ENCODE measurements at regions of chr19 and their contacts with region 1.

Region 1: DNA sequence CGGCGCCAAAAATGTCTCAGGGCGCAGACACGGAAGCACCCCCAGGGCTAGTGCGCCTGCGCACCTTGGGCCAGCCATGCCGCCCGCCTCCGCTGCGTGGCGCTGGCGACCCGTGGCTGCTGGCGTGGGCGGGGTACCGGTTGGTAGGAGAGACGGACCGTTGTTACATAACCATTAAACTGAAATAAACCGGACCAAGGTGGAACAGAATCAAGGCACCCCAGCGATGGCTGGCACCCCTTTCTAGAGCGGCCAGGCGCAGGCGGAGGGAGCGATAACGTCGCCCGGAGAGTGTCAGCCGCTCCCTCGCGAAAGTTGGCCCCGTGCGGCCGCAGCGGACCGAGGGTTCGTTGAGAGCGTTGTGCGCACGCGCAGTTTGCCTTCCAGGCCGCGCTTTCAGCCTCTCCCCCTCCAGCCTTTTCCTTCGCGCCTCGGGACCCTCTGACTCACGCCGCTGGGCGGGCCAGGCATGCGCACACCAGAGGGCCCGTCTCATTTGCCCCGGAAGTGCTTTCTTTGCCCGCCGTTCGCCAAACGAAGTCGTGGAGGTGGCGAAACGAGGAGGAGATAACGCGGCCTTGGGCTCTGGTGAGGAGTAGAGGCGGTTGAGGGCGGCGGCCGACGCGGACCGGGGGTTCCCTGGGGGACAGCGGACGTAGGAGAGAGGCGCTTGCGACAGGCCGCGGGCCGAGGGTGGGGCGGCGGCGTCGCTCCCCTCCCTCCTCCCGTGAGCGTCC is at the starts of genes PLEKHJ1 and SF3A2:
- DNase-seq: peak; percentile 84 to 95
- H3K4me3 ChIP-seq: peak within 1 kb of the TSS; percentile 82
- H3K27ac ChIP-seq: peak within 1 kb of the TSS; percentile 83
- H3K4me1 ChIP-seq: peaks cover 15% of the 10 kb centered on the region
- H3K27me3 ChIP-seq: no peaks in the 10 kb centered on the region
- CTCF ChIP-seq: peak; percentile 90
- total RNA-seq, gene PLEKHJ1: 38.6 and 45.9 TPM in 2 replicates
- total RNA-seq, gene SF3A2: 73.5 and 83.0 TPM in 2 replicates

Region 2: DNA sequence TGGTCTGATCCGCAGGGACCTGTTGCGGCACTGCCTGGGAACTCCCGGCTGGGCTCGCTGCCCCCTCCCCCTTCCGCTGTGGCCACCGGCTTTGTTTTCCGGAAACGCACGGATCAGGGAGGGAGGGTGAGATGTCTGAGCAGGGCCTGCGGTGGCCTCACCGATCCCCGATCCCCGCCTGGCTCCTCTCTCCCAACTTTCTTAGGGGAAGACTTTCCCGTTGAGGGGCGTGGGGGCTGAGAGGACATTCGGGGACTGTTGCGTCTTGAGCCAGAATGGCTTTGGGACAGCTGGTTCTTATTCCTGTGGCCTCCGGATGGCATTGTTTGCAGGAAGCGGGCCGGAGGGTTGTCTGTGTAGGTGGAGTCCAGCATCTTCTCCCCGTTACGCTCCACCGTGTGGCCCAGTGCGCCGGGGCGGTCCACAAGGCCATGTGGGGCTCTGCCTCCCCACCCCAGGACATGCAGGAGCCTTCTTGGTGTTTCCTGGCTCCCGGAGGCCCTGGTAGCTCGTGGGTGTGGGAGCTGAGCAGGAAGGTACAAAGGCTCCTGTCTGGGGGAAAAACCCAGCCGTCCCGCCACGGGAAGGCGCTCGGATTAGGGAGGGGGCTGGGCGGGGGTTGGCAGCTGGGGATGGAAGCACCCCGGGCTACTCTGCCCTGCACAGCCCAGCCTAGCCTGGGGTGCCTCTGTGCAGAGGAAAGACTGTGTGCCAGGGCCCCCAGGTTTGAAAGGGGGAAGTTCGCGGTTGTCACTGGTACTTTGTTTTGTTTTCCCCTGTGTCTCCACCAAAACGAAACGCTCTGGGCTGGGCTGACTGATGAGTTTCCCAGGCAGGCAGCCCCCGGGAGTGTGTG is 294.2 kb before region 1 on chr19:
- CTCF ChIA-PET with region 1: no interaction called
- POLR2A ChIA-PET with region 1: no interaction called
- intact Hi-C with region 1: no loop called
- DNase-seq: peak in 1 of 2 experiments; percentile 61
- H3K4me3 ChIP-seq: peak overlapping the region; percentile 81
- H3K27ac ChIP-seq: 0 out of 2 replicates have a peak overlapping the region, but pooled peaks have one; percentile 47
- H3K4me1 ChIP-seq: peaks cover 6% of the 10 kb centered on the region; the same call in 1 of the 2 replicates
- H3K27me3 ChIP-seq: no peaks in the 10 kb centered on the region
- CTCF ChIP-seq: no peak

Region 3: DNA sequence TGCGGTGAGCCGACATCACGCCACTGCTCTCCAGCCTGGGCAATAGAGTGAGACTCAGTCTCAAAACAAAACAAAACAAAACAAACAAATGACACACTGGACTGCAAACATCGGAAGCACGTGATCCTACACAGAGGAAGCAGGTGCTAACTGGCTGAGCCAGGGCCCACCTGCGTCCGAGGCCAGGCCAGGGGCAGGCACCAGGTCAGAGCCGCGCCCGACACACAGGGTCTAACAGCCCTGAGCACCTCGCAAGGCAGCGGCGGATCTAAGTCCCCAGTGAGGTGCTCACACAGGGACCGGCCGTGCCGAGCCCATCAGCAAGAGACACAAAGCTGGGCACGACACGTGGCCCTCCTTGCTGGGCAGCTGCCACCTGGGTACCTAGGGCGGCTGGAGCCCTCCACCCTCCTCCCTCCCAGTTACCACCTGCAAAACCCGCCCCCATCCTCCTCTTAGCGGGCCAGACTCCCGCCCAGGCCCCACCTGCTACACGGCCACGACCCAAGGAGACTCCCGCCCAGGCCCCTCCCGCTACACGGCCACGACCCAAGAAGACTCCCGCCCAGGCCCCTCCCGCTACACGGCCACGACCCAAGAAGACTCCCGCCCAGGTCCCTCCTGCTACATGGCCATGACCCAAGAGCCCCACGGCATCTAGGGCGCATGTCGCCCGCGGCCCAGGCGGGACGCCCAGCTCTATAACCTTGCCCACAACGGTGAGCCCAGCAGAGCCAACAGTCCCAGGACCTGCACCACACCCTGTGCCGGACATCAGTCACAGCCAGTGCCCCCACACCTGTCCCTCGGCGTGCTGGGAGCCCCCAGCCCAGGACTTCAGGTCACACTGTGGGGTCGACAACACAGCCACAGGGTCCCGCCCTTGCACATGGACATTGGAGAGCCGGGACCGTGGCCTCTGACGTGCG is 100.7 kb before region 1 on chr19:
- CTCF ChIA-PET with region 1: no interaction called
- POLR2A ChIA-PET with region 1: no interaction called
- intact Hi-C with region 1: no loop called
- DNase-seq: no peak
- H3K4me3 ChIP-seq: no peak overlapping the region
- H3K27ac ChIP-seq: no peak overlapping the region
- H3K4me1 ChIP-seq: no peaks in the 10 kb centered on the region
- H3K27me3 ChIP-seq: no peaks in the 10 kb centered on the region
- CTCF ChIP-seq: no peak

Region 4: DNA sequence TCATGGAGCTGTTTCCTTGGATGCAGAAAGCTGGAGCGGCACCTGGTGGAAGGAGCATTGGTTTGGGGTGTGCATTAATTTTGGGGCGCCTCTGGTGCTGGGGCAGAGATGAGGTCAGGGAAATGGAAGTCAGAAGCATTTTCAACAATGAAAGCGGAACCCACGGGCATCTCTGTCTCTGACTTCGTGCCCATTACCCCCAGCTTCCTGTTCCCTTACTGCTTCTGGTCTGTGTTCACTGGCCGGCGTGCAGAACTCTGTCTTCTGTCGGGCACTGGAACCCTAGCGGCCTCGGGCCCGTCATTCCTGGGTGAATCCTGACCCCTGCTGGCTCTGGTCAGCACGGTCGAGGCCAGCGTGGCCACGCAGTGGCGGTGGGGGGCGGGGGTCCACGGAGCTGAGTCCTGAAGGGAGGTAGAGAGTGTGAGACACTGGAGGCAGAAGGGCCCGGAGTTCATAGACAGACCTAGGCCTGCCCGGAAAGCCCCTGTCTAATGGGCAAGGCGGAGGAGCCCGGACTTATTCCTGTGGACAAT is 79.4 kb after region 1 on chr19:
- CTCF ChIA-PET with region 1: no interaction called
- POLR2A ChIA-PET with region 1: no interaction called
- intact Hi-C with region 1: loop called (anchors 1 kb)
- DNase-seq: peak in 1 of 2 experiments; percentile 52
- H3K4me3 ChIP-seq: no peak overlapping the region
- H3K27ac ChIP-seq: no peak overlapping the region
- H3K4me1 ChIP-seq: no peaks in the 10 kb centered on the region
- H3K27me3 ChIP-seq: no peaks in the 10 kb centered on the region
- CTCF ChIP-seq: peak; percentile 62

Region 5: DNA sequence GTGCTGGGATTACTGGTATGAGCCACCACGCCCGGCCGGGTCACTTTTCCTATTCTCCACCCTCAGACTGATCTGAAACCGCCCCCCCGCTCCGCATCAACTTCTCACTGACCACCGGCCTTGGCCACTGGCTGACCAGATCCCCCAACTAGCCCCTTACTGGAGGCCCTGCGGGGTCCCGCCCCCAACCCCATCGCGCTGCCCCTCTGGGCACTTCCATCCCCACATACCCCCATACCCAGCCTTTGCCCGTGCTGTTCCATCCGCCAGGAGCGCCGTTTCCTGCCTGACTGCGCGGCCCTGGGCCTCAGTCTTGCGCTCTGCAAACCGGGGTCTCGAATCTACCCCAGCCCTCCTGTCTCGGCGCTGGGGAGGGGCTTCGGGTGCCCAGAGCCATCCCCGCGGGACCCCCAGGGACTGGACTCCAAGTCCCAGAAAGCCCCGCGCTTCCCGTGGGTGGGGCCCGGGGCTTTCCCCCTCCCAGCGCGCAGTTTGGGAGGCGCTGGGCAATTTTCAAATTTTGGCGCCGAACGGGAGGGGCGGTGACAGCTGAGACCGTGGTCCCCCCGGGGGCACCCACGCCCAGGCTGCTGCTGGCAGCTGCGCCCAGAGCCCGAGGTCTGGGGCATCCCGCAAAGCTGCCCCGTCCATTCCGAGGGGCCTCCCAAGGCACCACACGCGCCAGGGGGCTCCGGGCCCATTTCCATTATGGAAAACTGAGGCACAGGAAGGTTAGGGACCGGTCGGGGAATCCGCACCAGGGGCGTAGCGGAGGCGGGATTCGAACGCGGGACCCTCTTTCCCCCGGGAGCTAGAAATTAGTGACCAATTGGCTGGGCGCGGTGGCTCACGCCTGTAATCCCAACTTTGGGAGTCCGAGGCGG is 225.5 kb after region 1 on chr19:
- CTCF ChIA-PET with region 1: no interaction called
- POLR2A ChIA-PET with region 1: no interaction called
- intact Hi-C with region 1: loop called (anchors 10 kb)
- DNase-seq: peak in 1 of 2 experiments; percentile 60
- H3K4me3 ChIP-seq: peak overlapping the region; percentile 61
- H3K27ac ChIP-seq: no peak overlapping the region
- H3K4me1 ChIP-seq: no peaks in the 10 kb centered on the region; the same call in 1 of the 2 replicates
- H3K27me3 ChIP-seq: no peaks in the 10 kb centered on the region
- CTCF ChIP-seq: no peak

Region 6: DNA sequence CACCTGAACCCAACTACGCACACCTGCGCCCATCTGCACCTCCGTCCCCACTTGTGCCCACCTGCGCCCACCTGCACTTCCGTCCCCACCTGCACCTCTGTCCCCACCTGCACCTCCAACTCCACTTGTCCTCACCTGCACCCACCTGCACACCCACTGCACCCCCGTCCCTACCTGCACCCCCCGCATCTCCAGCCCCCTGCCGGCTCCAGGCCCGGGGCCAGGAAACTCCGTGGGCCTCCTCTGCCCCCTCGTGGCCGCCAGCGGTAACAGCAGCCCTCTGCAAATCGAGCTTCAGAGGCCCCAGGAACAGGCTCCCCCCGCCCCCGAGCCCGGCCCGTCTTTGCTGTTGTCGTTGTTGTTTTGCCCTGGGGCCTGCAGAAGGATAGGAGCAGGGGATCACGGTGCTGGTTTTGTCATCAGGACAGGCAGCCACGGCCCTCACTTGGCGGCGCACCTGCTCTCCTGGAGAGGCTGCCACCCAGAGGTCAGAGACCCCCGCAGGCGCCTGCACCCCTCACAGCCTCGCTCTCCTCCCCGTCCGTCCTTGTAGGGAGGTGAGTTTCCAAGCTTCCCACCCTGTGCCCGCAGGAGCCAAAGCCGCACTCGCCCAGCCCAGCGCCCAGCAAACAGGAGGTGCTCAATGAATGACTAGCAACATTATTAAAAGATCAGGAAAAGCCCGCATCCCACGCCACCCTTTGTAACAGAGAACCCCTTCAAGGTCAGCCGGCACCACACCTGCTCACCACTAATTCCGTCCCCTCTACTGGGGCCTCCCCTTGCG is 400.6 kb after region 1 on chr19:
- CTCF ChIA-PET with region 1: interaction called, 10 read pairs
- POLR2A ChIA-PET with region 1: no interaction called
- intact Hi-C with region 1: no loop called
- DNase-seq: peak in 1 of 2 experiments; percentile 54
- H3K4me3 ChIP-seq: no peak overlapping the region
- H3K27ac ChIP-seq: no peak overlapping the region
- H3K4me1 ChIP-seq: no peaks in the 10 kb centered on the region
- H3K27me3 ChIP-seq: peaks cover 21% of the 10 kb centered on the region
- CTCF ChIP-seq: peak; percentile 84